Naive thymus-derived CD8-positive, alpha-beta T cell (primary cell): ENCODE measurements at regions of chr12 and their contacts with region 1.

Region 1: DNA sequence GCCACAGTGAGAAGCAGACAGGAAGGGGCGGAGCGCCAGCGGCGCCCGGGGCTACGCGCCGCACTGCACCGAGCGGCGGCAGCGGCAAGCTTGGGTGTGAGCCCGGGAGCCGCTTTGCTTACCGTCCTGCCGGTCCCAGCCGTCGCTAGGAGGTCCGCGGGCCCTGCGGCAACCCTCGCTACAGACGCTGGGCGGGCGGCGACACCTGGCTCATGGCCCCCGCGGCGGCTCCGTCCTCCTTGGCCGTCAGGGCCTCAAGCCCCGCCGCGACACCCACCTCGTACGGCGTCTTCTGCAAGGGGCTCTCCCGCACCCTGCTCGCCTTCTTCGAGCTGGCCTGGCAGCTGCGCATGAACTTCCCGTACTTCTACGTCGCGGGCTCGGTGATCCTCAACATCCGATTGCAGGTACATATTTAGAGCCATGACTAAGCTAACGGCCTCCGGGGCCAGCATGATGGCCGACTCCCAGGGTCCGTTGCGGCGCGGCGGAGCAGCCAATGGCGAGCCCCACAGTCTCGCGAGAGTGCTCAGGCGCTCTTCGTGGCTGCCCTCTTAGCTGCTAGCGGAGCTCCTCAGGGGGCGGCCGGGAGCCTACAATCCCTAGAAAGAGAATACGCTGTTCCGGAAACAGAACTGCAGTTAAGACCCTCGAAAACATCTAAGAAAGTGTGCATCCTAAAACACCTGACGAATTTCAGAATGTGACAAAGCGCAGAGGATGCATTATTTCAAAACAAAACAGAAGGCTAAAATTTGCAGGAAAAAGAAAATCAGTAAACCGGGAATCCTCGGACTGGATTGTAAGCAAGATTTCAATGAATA is at the start of gene SMIM10L1:
- DNase-seq: peak; percentile 81 to 94 (median 86)
- ATAC-seq: peak; percentile 93 to 95
- H3K4me3 Mint-ChIP-seq: peak within 1 kb of the TSS; percentile 95 to 100 (median 98)
- H3K27ac Mint-ChIP-seq: peak within 1 kb of the TSS; percentile 98 to 100 (median 99)
- H3K4me1 Mint-ChIP-seq: peaks cover 32 to 81% (median 68%) of the 10 kb centered on the region in 4 donors
- H3K27me3 Mint-ChIP-seq: no peaks in the 10 kb centered on the region
- polyA plus RNA-seq, gene SMIM10L1: 7.6 to 14.0 (median 11.0) TPM

Region 2: GRCh38 chr12:10613349-10614055 is 557.9 kb before region 1 on chr12 and contains the start of gene MAGOHB:
- POLR2A ChIA-PET with region 1: interaction called, 10 read pairs
- DNase-seq: peak; percentile 95 to 100 (median 98)
- ATAC-seq: peak; percentile 93 to 95
- H3K4me3 Mint-ChIP-seq: peak within 1 kb of the TSS; percentile 98 to 100 (median 99)
- H3K27ac Mint-ChIP-seq: peak within 1 kb of the TSS; percentile 99 to 100 (median 100)
- H3K4me1 Mint-ChIP-seq: peaks cover 18 to 37% (median 29%) of the 10 kb centered on the region in 4 donors
- H3K27me3 Mint-ChIP-seq: peaks cover 0 to 7% (median 2%) of the 10 kb centered on the region in 5 donors
- polyA plus RNA-seq, gene MAGOHB: 44.1 to 77.3 (median 53.9) TPM

Region 3: DNA sequence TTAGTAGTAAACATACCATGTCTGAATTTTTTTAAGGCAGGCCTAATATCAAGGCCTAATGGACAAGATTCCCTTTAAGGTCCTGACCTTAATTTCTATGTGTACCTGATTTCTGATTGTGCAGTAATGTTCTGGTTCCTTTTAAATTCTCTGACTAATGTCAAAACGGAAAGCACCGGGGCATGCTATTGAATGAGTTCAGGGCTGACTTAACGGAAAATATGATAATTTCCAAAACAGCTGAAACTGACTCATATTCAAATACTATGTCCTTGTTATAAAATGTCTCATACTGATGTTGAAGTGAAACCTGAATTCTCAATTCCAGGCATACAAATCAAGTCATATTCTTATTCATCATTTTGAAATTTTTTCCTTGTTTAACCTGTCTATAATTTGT is 85.9 kb before region 1 on chr12:
- POLR2A ChIA-PET with region 1: no interaction called
- DNase-seq: no peak
- ATAC-seq: no peak
- H3K4me3 Mint-ChIP-seq: no peak overlapping the region
- H3K27ac Mint-ChIP-seq: no peak overlapping the region
- H3K4me1 Mint-ChIP-seq: peaks cover 0 to 5% (median 0%) of the 10 kb centered on the region in 4 donors
- H3K27me3 Mint-ChIP-seq: no peaks in the 10 kb centered on the region

Region 4: DNA sequence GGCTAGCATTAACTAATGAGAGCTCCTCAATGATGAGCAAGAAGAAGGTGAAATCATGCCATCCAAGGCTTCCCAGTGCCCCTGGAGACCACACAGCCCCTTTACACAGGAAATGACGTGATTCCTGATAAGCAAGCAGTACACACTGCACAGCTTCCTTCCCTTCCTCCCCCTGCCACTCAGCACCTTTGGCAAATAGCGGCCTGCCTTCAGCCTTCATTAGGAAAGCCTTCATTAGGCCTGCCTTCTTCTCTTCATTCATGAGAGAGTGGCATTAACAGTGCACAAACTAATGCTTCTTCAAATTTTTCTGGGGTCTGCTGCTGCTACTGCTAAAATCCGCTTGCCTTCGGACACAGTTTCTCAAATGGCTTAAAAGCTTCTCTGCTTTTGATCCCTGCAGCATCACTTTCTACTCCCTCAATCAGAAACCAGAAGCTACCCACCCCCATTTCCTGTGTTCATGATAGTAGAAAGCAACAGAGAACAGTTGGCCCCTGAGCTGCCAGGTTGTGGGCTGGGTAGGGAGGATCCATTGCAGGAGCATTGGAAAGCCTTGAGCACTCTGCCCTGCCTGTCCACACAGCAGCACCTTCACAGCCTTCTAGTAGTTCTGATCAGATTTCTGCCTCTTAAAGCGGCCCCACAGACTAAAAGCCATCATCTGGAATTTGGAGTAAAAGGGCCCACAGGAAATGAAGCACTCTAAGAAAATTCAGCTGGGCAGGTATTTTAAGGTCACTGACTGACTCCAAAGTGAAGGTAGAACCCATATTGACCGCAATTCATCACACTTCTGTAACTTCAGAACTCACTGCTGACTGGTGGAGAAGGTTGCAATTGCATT is 374.4 kb after region 1 on chr12:
- POLR2A ChIA-PET with region 1: interaction called, 16 read pairs
- DNase-seq: peak in 9 of 10 donors; percentile 12 to 87 (median 69)
- ATAC-seq: peak; percentile 80 to 84
- H3K4me3 Mint-ChIP-seq: peak overlapping the region; percentile 61 to 87 (median 75)
- H3K27ac Mint-ChIP-seq: peak overlapping the region; percentile 91 to 99 (median 97)
- H3K4me1 Mint-ChIP-seq: peaks cover 28 to 66% (median 54%) of the 10 kb centered on the region in 4 donors
- H3K27me3 Mint-ChIP-seq: no peaks in the 10 kb centered on the region